Activated T-helper 1 cell treated with anti-CD3 and anti-CD28 coated beads, Interleukin-12 subunit alpha, Interleukin-12 subunit beta, Interleukin-2, Interleukin-4 antibody, amounts not matched to agents 30 ng/mL and 10 ng/mL and 1 ng/mL, durations not matched to agents 14 hours and 24 hours and 36 hours (primary cell): ENCODE measurements at regions of chr19 and their contacts with region 1.

Region 1: DNA sequence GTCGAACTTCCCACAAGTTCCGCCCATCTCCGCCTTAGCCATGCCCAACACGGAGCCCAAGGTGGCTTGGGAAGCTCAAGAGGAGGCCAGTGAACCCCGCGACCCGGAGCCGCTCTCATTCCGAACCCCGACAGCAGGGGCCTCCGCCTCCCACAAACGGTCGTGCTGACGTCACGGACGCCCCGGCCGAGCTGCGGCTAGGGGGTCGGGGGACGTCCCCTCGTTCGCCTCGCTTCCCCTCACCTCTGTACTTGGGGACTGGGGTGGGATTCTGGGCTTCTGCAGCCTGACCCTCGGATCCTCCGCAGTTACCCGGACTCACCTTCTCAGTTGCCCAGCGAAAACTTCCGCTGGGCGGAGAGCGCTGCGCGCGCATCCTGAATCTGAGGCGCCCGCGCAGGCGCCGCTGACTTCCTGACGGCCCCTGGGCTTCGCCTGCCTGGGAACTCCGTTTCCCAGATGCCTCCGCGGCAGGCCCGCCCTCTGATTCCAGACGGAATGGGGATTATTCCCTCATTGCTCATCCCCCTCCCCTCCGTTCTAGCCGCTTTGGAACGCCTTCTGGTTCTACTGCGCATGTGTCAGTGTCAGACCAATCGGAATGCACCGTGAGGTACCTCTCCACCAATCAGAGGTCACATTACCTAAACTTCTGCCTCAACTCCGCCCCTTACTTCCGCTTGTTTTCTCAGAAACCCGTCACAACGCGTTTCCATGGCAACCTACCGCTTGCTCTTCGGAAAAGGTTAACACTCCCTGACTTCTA is at the start of gene VRK3:
- DNase-seq: peak; percentile 99
- H3K4me3 Mint-ChIP-seq: peak within 1 kb of the TSS; percentile 93
- H3K27ac Mint-ChIP-seq: peak within 1 kb of the TSS; percentile 99
- H3K4me1 Mint-ChIP-seq: peaks cover 40% of the 10 kb centered on the region
- H3K27me3 Mint-ChIP-seq: peaks cover 6% of the 10 kb centered on the region
- total RNA-seq, gene VRK3: 66.7 and 69.4 TPM in 2 replicates

Region 2: DNA sequence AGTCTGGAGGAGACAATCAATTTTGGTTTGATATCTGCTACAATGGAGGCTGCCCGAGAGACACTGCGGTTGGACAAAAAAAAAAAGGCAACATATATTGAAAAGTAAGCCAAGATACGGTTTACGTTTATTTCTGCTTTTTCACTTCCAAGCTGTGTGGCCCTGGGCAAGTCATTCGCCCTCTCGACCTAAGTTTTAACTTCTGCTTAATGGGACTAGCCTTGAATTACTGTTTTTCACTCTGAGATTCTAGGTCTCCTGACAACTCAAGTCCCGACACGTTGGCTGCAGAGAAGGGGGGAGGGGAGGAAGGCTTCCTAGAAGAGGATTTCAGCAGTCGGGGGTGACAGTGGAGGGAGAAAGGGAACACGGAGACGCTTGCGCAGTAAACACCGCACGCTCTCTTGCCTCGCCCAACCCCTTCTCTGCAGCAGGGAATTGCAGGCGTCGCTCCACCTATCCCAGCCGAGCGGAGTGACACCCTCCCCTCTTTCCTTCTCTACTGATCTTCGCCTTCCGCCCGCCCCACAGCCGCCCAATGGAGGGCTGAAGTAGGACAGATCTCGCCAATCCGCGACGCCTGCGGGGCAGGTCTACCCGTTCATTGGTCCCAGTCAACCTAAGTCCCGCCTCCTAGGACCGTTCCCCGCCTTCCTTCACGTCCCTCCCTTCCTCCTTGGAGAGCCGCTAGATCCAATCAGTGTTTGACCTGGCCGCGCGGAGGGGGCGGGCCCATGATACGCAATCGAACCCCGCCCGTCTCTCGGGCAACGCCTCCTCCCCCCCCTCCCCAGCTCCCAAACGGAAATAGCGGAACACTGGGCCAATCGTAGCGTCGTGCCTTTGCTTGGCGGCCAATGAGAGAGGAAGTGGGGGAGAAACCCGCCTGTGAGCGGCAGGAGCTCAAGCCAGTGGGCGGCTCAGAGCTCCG is 258.9 kb before region 1 on chr19:
- intact Hi-C with region 1: loop called (anchors 1 kb)
- DNase-seq: peak; percentile 99
- H3K4me3 Mint-ChIP-seq: peak overlapping the region; percentile 89
- H3K27ac Mint-ChIP-seq: peak overlapping the region; percentile 91
- H3K4me1 Mint-ChIP-seq: peaks cover 24% of the 10 kb centered on the region
- H3K27me3 Mint-ChIP-seq: no peaks in the 10 kb centered on the region

Region 3: DNA sequence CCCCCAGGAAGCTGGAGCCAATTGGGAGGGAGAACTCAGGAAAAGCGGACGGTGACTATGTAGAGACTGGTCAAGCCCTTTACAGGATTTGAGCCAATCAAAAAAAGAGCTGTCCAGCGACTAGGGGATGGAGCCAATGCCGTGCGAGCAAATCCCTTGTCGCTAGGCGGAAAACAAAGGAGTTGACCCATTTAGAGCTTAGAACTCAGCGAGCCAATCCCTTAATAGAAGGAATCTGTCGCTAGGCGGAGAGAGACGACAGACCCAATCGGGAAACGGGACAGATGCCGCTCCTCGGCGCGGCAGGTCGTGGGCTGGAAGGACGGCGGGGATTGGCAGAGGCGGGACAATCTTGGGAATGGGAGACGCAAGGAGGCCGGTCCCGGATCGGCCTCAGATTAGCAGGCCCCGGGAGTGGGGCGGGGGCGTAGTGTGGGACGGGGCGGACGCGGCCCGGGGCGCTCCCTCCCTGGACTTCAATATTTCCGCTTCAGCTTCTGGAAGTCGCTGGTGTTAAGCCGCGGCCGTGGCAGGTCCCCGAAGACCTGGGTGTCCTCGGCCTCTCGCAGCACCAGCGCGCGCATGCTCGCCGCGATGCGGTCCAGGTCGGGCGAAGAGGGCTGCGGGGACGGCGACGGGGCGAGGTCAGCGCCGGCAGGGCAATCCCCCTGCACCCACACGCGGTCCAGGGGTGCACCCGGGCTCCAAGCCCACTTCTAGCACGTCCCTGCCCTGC is 155.6 kb before region 1 on chr19:
- intact Hi-C with region 1: loop called (anchors 1 kb)
- DNase-seq: peak; percentile 92
- H3K4me3 Mint-ChIP-seq: no peak overlapping the region
- H3K27ac Mint-ChIP-seq: no peak overlapping the region
- H3K4me1 Mint-ChIP-seq: peaks cover 36% of the 10 kb centered on the region
- H3K27me3 Mint-ChIP-seq: no peaks in the 10 kb centered on the region

Region 4: DNA sequence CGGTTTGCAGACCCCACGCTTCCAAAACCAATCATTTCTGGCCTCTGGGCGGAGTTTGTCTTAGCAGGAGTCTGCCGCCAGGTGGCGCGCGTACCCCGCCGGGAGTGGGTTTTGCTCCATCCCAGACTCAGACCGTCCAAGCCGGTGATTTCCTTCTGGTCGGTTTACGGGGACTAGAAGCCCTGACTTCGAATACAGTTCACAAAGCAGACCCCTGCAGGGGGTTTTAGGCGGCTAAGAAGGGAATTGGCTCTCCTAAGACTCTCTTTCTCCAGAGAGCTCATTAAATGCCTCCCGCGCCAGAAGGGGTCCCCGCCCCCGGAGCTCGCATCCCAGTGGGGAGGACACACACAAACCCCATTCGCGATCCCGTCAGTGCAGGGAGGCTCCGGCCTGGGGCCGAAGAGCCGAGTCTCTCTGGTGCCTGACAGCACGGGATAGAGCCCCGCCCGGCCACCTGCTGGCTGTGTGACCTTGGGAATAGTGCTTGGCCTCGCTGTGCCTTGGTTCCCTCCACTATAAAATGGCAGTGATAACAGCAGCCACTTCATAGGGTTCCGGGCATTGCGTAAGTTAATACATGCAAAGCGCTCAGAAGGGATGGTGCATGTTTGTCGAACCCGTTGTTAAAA is 87.3 kb before region 1 on chr19:
- intact Hi-C with region 1: loop called (anchors 1 kb)
- DNase-seq: peak; percentile 68
- H3K4me3 Mint-ChIP-seq: no peak overlapping the region
- H3K27ac Mint-ChIP-seq: no peak overlapping the region
- H3K4me1 Mint-ChIP-seq: peaks cover 14% of the 10 kb centered on the region
- H3K27me3 Mint-ChIP-seq: peaks cover 15% of the 10 kb centered on the region

Region 5: GRCh38 chr19:50003810-50004419 is 21.3 kb before region 1 on chr19:
- intact Hi-C with region 1: loop called (anchors 1 kb)
- DNase-seq: peak; percentile 11
- H3K4me3 Mint-ChIP-seq: peak overlapping the region; percentile 15
- H3K27ac Mint-ChIP-seq: peak overlapping the region; percentile 62
- H3K4me1 Mint-ChIP-seq: peaks cover 33% of the 10 kb centered on the region
- H3K27me3 Mint-ChIP-seq: no peaks in the 10 kb centered on the region

Region 6: GRCh38 chr19:50511068-50511822 is 486.0 kb after region 1 on chr19 and contains the start of gene JOSD2:
- intact Hi-C with region 1: loop called (anchors 1 kb)
- DNase-seq: peak; percentile 97
- H3K4me3 Mint-ChIP-seq: peak within 1 kb of the TSS; percentile 96
- H3K27ac Mint-ChIP-seq: peak within 1 kb of the TSS; percentile 99
- H3K4me1 Mint-ChIP-seq: peaks cover 18% of the 10 kb centered on the region
- H3K27me3 Mint-ChIP-seq: peaks cover 10% of the 10 kb centered on the region
- total RNA-seq, gene JOSD2: 38.5 and 41.7 TPM in 2 replicates